GM12878 (cell line): ENCODE measurements at regions of chr11 and their contacts with region 1.

Region 1: DNA sequence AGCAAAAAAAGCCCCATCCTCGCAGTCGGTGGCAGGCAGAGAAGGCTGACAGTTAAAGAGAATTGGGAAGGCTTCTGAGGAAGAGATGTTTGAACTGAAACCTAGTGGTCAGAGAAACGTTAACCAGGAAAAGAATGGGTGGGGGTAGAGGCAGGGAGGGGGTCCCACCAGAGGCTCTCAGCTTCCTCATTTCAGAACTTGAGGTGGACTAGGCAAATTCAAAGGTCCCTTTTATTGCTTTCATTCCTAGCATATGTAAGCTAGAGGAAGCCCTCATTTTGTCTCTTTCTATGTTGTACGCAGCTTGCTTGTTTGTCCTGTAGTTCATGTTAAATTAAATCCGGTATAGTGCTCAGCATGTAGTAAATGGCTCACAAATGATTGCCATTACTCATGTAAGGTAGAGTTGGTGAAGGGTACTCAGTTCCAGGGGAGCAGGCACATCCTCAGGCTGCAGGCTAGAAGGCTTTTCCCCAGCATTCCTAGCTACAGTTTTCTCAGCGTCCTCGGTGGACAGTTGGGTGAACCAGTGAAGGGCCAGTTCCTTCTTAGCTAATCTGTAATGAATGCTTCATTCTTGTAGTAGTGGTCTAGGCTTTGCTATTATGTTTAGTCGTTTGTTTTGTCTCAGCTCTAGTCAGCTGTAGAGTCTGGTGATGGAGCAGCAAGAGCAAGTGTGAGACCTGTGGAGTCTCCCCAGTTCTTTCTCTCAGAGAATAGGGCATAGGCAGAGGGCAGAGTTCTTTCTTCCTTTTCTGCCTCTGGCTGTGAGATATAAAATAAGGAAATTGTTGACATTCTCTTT is 58.6 kb downstream of the UVRAG start:
- DNase-seq: peak; percentile 73
- ATAC-seq: peak; percentile 90
- H3K4me3 ChIP-seq: peak overlapping the region; percentile 25
- H3K27ac ChIP-seq: peak overlapping the region; percentile 84
- H3K4me1 ChIP-seq: peaks cover 26% of the 10 kb centered on the region
- H3K27me3 ChIP-seq: no peaks in the 10 kb centered on the region
- CTCF ChIP-seq: no peak
- EP300 ChIP-seq: peak; percentile 14 to 53; a peak in 2 of 4 replicates
- POLR2A ChIP-seq: no peak
- RAD21 ChIP-seq: no peak

Region 2: GRCh38 chr11:75717608-75718418 is 155.8 kb before region 1 on chr11 and contains the start of gene MOGAT2:
- CTCF ChIA-PET with region 1: interaction called, 19 read pairs
- POLR2A ChIA-PET with region 1: no interaction called
- RAD21 ChIA-PET with region 1: no interaction called
- SMC1A ChIA-PET with region 1: no interaction called
- in situ Hi-C with region 1: loop called (anchors 10 kb)
- intact Hi-C with region 1: loop called (anchors 2 kb)
- DNase-seq: no peak
- ATAC-seq: no peak
- H3K4me3 ChIP-seq: no peak within 1 kb of the TSS
- H3K27ac ChIP-seq: no peak within 1 kb of the TSS
- H3K4me1 ChIP-seq: peaks cover 11% of the 10 kb centered on the region
- H3K27me3 ChIP-seq: no peaks in the 10 kb centered on the region
- CTCF ChIP-seq: no peak
- EP300 ChIP-seq: no peak
- POLR2A ChIP-seq: no peak
- RAD21 ChIP-seq: no peak
- polyA plus RNA-seq, gene MOGAT2: 0.16 to 0.21 TPM

Region 3: DNA sequence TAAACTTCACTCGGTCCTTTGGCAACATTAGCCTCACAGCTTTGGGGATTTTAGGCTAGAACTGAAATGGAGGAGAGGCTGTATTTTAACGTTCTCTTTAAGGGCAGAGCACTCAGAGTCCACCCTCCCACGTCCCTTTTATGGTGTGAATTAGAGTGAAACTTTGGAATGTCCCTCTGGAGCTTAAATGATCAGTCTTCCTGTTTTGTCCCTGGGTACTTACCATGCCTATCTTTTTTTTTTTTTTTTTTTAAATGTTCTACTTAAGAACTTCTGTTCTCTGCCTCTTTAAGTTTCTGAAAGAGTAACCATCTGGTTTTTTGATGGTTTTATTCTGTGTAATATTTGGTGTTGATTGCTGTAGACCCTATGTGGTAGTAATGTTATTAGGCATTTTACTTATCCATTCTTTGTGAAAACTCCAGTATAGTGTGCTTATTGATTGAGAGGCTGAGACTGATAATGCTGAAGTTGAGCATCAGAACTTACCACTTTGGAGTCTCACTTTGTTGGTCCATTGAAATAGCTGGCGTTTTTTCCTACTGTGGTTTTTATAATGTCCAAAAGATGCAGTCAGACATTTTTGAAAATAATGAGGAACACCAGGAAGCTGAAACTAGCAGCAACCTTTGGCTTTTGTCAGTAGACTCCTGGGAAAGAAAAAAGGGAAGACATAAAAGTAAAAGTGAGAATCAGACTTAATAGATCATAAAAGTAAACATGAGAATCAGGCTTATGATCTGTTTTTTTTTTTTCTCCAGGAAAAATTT is 47.0 kb before region 1 on chr11:
- CTCF ChIA-PET with region 1: interaction called, 131 read pairs
- POLR2A ChIA-PET with region 1: interaction called, 13 read pairs
- RAD21 ChIA-PET with region 1: interaction called, 8 read pairs
- SMC1A ChIA-PET with region 1: interaction called, 78 read pairs
- in situ Hi-C with region 1: no loop called
- intact Hi-C with region 1: no loop called
- DNase-seq: no peak
- ATAC-seq: peak; percentile 11
- H3K4me3 ChIP-seq: peak overlapping the region; percentile 63; the same call in 1 of the 2 replicates
- H3K27ac ChIP-seq: peak overlapping the region; percentile 92
- H3K4me1 ChIP-seq: peaks cover 35% of the 10 kb centered on the region
- H3K27me3 ChIP-seq: no peaks in the 10 kb centered on the region
- CTCF ChIP-seq: no peak
- EP300 ChIP-seq: no peak
- POLR2A ChIP-seq: no peak
- RAD21 ChIP-seq: no peak

Region 4: DNA sequence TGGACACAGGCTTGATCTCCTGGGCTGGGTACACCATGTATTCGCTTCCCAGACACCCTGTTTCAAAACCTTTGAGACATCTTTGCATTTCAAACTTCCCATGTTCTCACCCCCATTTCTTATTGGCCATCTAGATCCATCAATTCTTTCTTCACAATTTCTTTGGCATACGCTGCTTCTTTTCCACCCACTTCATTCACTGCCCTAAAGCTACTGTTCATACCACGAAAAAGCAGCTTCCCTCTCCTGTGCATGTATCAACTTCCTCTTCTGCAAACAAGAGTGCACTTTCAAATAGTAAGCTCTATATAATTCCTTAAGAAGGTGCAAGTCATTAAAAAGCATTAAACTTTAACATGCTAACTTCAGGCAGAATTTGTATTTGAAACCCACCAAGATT is 37.2 kb before region 1 on chr11:
- CTCF ChIA-PET with region 1: interaction called, 131 read pairs
- POLR2A ChIA-PET with region 1: interaction called, 6 read pairs
- RAD21 ChIA-PET with region 1: interaction called, 4 read pairs
- SMC1A ChIA-PET with region 1: interaction called, 13 read pairs
- in situ Hi-C with region 1: no loop called
- intact Hi-C with region 1: no loop called
- DNase-seq: no peak
- ATAC-seq: peak; percentile 84
- H3K4me3 ChIP-seq: peak overlapping the region; percentile 18; the same call in 1 of the 2 replicates
- H3K27ac ChIP-seq: peak overlapping the region; percentile 58
- H3K4me1 ChIP-seq: peaks cover 17% of the 10 kb centered on the region
- H3K27me3 ChIP-seq: no peaks in the 10 kb centered on the region
- CTCF ChIP-seq: no peak
- EP300 ChIP-seq: no peak
- POLR2A ChIP-seq: no peak
- RAD21 ChIP-seq: no peak

Region 5: DNA sequence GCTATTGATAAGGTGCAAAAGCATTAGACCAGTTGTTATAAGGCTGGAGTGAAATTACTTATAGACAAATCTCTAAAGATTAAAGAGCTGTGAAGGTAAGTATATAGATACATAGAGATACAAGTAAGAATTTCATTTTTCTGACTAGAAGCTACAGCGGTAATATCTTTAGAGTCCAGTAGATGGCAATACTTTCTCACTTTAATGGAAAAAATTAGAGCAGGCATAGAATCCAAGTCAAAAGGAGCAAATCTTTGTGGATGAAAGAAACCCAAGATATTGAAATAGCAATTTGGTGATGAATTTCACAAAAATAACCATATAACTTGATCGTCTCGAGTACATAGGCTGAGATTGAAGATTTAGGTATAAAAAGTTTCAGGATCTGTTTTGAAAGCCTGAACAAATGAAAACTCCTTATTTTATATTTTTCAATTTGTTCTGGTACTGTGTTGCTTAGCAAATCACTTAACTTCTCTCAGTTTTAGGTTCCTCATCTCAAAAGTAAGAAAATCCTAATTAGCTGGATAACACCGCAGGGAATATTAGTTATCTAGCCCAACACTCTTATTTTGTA is 23.3 kb after region 1 on chr11:
- CTCF ChIA-PET with region 1: interaction called, 18 read pairs
- POLR2A ChIA-PET with region 1: interaction called, 10 read pairs
- RAD21 ChIA-PET with region 1: interaction called, 13 read pairs
- SMC1A ChIA-PET with region 1: interaction called, 32 read pairs
- in situ Hi-C with region 1: no loop called
- intact Hi-C with region 1: no loop called
- DNase-seq: no peak
- ATAC-seq: peak; percentile 46
- H3K4me3 ChIP-seq: no peak overlapping the region
- H3K27ac ChIP-seq: no peak overlapping the region
- H3K4me1 ChIP-seq: peaks cover 8% of the 10 kb centered on the region
- H3K27me3 ChIP-seq: no peaks in the 10 kb centered on the region
- CTCF ChIP-seq: peak; percentile 55 to 62 (median 57)
- EP300 ChIP-seq: no peak
- POLR2A ChIP-seq: no peak
- RAD21 ChIP-seq: peak; percentile 77